ENCODE measurements at regions of chr5 and their contacts with region 1.

Region 1: DNA sequence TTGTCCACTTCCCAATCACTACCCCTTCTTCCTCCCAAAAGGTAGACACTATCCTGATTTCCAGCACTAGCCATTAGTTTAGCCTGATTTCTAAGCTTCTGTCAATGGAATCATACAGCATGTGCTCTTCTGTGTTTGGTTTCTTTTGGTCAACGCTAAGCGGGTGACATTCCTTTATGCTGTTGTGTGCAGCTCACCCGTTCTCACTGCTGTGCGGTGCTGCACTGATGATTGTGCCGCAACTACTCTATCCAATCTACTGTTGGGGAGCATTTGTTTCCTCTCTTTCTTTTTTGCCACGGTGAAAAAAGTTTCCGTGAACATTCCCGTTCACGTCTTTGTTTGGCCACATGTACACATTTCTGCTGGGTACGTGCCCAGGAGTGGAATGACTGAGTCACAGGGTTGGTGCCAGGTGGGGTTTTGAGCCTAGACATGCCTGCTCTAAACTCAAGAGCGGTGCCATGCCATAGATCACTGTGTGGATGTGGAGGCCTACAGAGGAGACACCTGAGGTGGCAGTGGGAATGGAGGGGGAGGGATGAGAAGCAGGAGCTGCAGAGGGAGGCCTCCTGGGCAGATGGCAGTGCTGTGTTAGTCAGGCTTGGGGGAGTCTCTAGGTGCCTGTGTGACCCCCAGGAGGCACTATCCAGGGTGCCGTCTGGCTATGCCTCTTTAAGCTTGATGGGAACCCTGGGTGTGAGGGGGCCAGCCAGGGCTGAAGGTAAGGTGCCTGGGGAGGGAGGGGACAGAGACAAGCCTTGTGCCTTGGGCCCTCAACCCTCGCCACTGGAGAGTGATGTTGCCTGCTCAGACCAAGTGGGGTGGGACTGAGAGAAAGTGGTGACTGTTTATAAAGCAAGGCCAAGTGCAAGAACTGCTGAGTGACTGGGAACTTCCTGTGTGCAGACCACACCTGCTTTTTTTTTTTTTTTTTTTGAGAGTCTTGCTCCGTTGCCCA is 11.4 kb upstream of the ANKRD33B start:
- DNase-seq: peak; percentile 61
- ATAC-seq: no peak
- H3K4me3 ChIP-seq: no peak overlapping the region
- H3K27ac ChIP-seq: peak overlapping the region; percentile 92
- H3K4me1 ChIP-seq: peaks cover 71% of the 10 kb centered on the region
- H3K27me3 ChIP-seq: no peaks in the 10 kb centered on the region
- CTCF ChIP-seq: no peak

Region 2: GRCh38 chr5:10528056-10528816 is 24.2 kb before region 1 on chr5:
- CTCF ChIA-PET with region 1: no interaction called
- POLR2A ChIA-PET with region 1: no interaction called
- intact Hi-C with region 1: no loop called
- DNase-seq: no peak
- ATAC-seq: no peak
- H3K4me3 ChIP-seq: no peak overlapping the region
- H3K27ac ChIP-seq: no peak overlapping the region
- H3K4me1 ChIP-seq: no peaks in the 10 kb centered on the region
- H3K27me3 ChIP-seq: no peaks in the 10 kb centered on the region
- CTCF ChIP-seq: no peak; the same call in 1 of the 2 replicates

Region 3: DNA sequence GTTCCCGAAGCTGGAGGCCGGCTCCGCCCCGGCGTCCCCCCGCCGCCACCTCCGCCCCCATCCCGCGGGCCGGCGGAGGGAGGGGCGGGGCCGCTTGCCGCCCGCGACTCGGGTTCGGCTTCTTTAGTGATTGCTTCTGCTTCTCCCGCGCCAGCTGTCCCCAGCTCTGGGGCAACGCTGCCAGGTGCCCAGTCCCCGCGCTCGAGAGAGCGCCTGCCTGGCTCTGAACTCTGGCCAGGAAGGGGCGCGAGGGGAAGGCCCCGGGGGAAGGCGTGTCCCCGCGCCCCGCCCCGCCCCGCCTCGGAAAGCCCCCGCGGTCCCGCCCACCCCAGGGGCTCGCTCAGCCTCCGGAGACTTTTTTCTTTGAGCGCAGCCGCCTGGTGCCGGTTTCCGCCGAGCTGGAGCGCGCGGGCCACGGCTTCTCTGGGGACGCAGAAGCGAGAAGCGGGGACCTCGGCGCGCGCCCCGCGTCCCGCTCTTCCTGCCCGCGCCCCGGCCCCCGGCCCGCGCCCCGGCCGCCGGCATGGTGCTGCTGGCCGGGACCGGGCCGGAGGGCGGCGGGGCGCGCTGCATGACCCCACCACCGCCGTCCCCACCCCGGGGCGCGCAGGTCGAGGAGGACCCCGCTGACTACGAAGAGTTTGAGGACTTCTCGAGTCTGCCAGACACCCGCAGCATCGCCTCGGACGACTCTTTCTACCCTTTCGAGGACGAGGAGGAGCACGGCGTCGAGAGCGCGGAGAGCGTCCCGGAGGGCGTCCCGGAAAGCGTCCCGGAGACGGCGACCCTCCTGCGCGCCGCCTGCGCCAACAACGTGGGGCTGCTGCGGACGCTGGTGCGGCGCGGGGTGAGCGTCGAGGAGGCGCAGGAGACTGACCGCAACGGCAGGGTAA is 11.7 kb after region 1 on chr5 and contains the start of gene ANKRD33B:
- CTCF ChIA-PET with region 1: no interaction called
- POLR2A ChIA-PET with region 1: interaction called, 13 read pairs
- intact Hi-C with region 1: no loop called
- DNase-seq: peak; percentile 88
- ATAC-seq: peak; percentile 69
- H3K4me3 ChIP-seq: peak within 1 kb of the TSS; percentile 82
- H3K27ac ChIP-seq: peak within 1 kb of the TSS; percentile 72
- H3K4me1 ChIP-seq: peaks cover 29% of the 10 kb centered on the region
- H3K27me3 ChIP-seq: no peaks in the 10 kb centered on the region
- CTCF ChIP-seq: no peak
- total RNA-seq, gene ANKRD33B: 13.2 and 14.9 TPM in 2 replicates

Region 4: GRCh38 chr5:10607666-10608073 is 55.2 kb after region 1 on chr5:
- CTCF ChIA-PET with region 1: no interaction called
- POLR2A ChIA-PET with region 1: no interaction called
- intact Hi-C with region 1: no loop called
- DNase-seq: no peak
- ATAC-seq: no peak
- H3K4me3 ChIP-seq: no peak overlapping the region
- H3K27ac ChIP-seq: no peak overlapping the region
- H3K4me1 ChIP-seq: no peaks in the 10 kb centered on the region
- H3K27me3 ChIP-seq: no peaks in the 10 kb centered on the region
- CTCF ChIP-seq: no peak

Region 5: GRCh38 chr5:10627160-10627701 is 74.8 kb after region 1 on chr5:
- CTCF ChIA-PET with region 1: interaction called, 4 read pairs
- POLR2A ChIA-PET with region 1: interaction called, 7 read pairs
- intact Hi-C with region 1: loop called (anchors 5 kb)
- DNase-seq: no peak
- ATAC-seq: peak; percentile 21
- H3K4me3 ChIP-seq: peak overlapping the region; percentile 59
- H3K27ac ChIP-seq: peak overlapping the region; percentile 1; the same call in 1 of the 2 replicates
- H3K4me1 ChIP-seq: peaks cover 12% of the 10 kb centered on the region
- H3K27me3 ChIP-seq: no peaks in the 10 kb centered on the region
- CTCF ChIP-seq: no peak

Measured in PC-3 (cell line).